ENCODE measurements at regions of chr11 and their contacts with region 1.

Region 1: DNA sequence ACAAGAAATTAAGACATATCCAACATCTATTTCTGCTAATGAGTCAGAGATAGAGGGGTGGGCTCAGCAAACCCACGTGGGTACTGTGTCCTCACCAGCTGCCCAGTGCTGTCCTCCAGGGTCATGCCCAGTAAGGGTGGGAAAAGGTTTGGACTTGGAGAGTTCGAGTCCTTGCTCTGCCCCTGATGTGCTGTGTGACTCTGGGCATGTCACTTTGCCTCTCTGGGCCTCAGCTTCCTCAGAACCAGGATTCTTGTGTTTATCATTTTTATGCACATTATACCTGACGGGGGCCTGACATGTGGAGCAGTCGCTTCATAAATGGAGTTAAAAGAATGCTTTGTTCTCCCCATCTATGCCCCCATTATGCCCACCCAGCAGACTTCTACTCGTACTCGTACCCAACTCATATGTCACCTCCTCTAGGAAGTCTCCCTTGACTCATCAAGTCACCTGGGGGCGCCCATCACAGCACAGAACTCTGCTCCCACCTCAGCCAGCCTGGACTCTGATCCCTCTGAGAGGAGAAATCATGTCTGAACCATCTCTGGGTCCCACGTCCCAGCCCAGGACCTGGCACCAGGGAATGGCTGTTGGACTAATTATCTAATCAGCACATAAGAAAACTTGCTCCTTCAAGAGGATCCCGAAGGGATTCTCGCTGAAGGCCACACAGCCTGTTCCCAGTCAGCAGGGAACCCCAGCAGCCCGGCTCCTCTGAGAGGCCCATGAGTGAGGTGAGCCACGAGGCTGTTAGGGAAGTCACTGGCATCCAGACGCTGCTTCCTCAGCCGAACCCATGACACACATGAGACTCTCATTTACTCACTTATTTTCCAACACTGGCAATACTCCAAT is 38.7 kb upstream of the TSKU start:
- DNase-seq: peak in 1 of 2 donors; percentile 56
- H3K4me3 ChIP-seq: no peak overlapping the region
- H3K27ac ChIP-seq: peak overlapping the region in 4 of 5 donors; percentile 48 to 63 (median 58)
- H3K4me1 ChIP-seq: peaks cover 0 to 29% (median 8%) of the 10 kb centered on the region in 4 donors
- H3K27me3 ChIP-seq: no peaks in the 10 kb centered on the region
- CTCF ChIP-seq: no peak
- EP300 ChIP-seq: no peak
- POLR2A ChIP-seq: no peak

Region 2: GRCh38 chr11:76791861-76792260 is 47.4 kb after region 1 on chr11:
- intact Hi-C with region 1: loop called (anchors 5 kb)
- DNase-seq: peak in 1 of 2 donors; percentile 26
- H3K4me3 ChIP-seq: no peak overlapping the region
- H3K27ac ChIP-seq: no peak overlapping the region
- H3K4me1 ChIP-seq: peaks cover 19 to 76% (median 61%) of the 10 kb centered on the region in 4 donors
- H3K27me3 ChIP-seq: no peaks in the 10 kb centered on the region
- CTCF ChIP-seq: no peak
- EP300 ChIP-seq: no peak
- POLR2A ChIP-seq: no peak

Measured in stomach (tissue), 19 donors.